Head of caudate nucleus (tissue), 42 donors: ENCODE measurements at regions of chr19 and their contacts with region 1.

Region 1: GRCh38 chr19:14395710-14396336 is 14.6 kb downstream of the ADGRE5 start:
- DNase-seq: no peak

Region 2: GRCh38 chr19:14479975-14480699 is 84.3 kb after region 1 on chr19:
- intact Hi-C with region 1: no loop called
- DNase-seq: peak in 23 of 42 donors; percentile 37 to 80 (median 54)

Region 3: DNA sequence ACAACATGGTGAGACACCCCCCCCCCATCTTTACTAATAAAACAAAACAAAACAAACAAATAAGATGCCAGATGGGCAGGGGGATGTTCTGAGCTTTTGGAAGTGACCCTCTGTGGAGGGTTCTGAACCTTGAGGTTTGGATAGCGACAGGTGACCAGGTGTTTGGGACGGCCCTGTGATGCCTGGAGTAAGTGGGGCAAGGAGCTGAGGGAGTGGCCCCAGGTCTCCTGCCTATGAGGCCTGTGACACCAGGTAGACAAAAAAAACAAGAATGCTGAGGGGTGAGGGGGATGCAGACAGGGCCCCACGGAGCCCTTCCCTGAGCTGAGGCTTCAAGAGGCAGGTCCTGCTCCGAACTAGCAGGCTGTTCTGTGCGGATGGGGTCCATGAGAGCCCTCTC is 373.4 kb after region 1 on chr19:
- intact Hi-C with region 1: loop called (anchors 5 kb)
- DNase-seq: peak in 1 of 42 donors; percentile 16